ENCODE measurements at regions of chr1 and their contacts with region 1.

Region 1: GRCh38 chr1:6059866-6060265 is 14.2 kb downstream of the KCNAB2 start:
- DNase-seq: peak; percentile 30
- H3K4me3 ChIP-seq: no peak overlapping the region
- H3K27ac ChIP-seq: no peak overlapping the region
- H3K4me1 ChIP-seq: peaks cover 13% of the 10 kb centered on the region
- H3K27me3 ChIP-seq: no peaks in the 10 kb centered on the region
- CTCF ChIP-seq: no peak

Region 2: GRCh38 chr1:6014130-6014999 is 45.5 kb before region 1 on chr1:
- CTCF ChIA-PET with region 1: no interaction called
- dilution Hi-C with region 1: loop called (anchors 5 kb)
- in situ Hi-C with region 1: no loop called
- intact Hi-C with region 1: no loop called
- DNase-seq: no peak
- H3K4me3 ChIP-seq: no peak overlapping the region
- H3K27ac ChIP-seq: no peak overlapping the region
- H3K4me1 ChIP-seq: peaks cover 14% of the 10 kb centered on the region
- H3K27me3 ChIP-seq: no peaks in the 10 kb centered on the region
- CTCF ChIP-seq: no peak

Region 3: GRCh38 chr1:6033124-6033523 is 26.7 kb before region 1 on chr1:
- CTCF ChIA-PET with region 1: interaction called, 12 read pairs
- dilution Hi-C with region 1: no loop called
- in situ Hi-C with region 1: no loop called
- intact Hi-C with region 1: no loop called
- DNase-seq: no peak
- H3K4me3 ChIP-seq: no peak overlapping the region
- H3K27ac ChIP-seq: no peak overlapping the region
- H3K4me1 ChIP-seq: no peaks in the 10 kb centered on the region
- H3K27me3 ChIP-seq: no peaks in the 10 kb centered on the region
- CTCF ChIP-seq: no peak

Region 4: DNA sequence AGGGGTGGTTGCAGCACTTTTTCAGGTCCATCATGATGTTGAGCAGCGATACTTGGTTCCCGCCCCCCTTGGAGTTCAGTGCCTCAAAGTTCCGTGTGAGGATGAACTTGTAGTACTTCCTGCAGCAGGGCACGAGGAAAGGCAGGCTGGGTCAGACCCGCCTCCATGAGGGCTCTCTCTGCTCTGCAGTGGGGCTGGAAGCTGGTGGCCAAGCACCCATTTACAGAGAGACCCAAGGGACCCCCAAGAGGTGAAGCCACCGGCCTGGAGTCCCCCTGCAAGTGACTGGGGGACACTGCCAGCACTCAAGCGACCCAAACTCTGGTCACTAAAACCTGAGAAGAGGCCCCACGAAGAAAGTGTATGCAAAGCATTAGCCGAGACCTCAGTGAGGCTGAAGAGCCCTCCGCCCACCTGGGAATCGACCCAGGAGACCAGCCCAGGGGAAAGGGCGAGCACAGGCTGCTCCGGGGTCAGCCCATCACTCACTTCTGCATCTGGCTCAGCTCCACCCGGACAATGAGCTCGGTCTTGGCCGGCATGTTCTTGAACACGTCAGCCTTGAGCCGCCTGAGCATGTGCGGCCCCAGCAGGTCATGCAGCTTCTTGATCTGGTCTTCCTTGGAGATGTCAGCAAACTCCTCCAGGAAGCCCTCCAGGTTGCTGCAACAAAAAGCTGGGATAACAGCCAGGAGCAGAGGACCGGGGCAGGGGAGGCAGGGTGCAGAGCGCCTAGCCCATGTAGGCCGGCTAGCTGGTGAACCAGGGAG is 75.1 kb after region 1 on chr1:
- CTCF ChIA-PET with region 1: no interaction called
- dilution Hi-C with region 1: loop called (anchors 5 kb)
- in situ Hi-C with region 1: no loop called
- intact Hi-C with region 1: no loop called
- DNase-seq: no peak
- H3K4me3 ChIP-seq: no peak overlapping the region
- H3K27ac ChIP-seq: no peak overlapping the region
- H3K4me1 ChIP-seq: no peaks in the 10 kb centered on the region
- H3K27me3 ChIP-seq: no peaks in the 10 kb centered on the region
- CTCF ChIP-seq: no peak

Measured in mammary epithelial cell (primary cell).